ENCODE measurements at regions of chr11 and their contacts with region 1.

Region 1: GRCh38 chr11:13772223-13773046 is 104.0 kb downstream of the FAR1 start:
- DNase-seq: peak; percentile 22
- H3K4me3 Mint-ChIP-seq: no peak overlapping the region
- H3K27ac Mint-ChIP-seq: no peak overlapping the region
- H3K4me1 Mint-ChIP-seq: no peaks in the 10 kb centered on the region
- H3K27me3 Mint-ChIP-seq: peaks cover 14% of the 10 kb centered on the region

Region 2: GRCh38 chr11:13955971-13956421 is 183.6 kb after region 1 on chr11:
- intact Hi-C with region 1: loop called (anchors 5 kb)
- DNase-seq: peak; percentile 20
- H3K4me3 Mint-ChIP-seq: no peak overlapping the region
- H3K27ac Mint-ChIP-seq: no peak overlapping the region
- H3K4me1 Mint-ChIP-seq: no peaks in the 10 kb centered on the region
- H3K27me3 Mint-ChIP-seq: peaks cover 39% of the 10 kb centered on the region

Region 3: GRCh38 chr11:14148653-14149273 is 376.3 kb after region 1 on chr11:
- intact Hi-C with region 1: loop called (anchors 1 kb)
- DNase-seq: no peak
- H3K4me3 Mint-ChIP-seq: no peak overlapping the region
- H3K27ac Mint-ChIP-seq: no peak overlapping the region
- H3K4me1 Mint-ChIP-seq: peaks cover 4% of the 10 kb centered on the region
- H3K27me3 Mint-ChIP-seq: peaks cover 10% of the 10 kb centered on the region

Measured in activated T-helper 1 cell treated with anti-CD3 and anti-CD28 coated beads, Interleukin-12 subunit alpha, Interleukin-12 subunit beta, Interleukin-2, Interleukin-4 antibody, amounts not matched to agents 30 ng/mL and 10 ng/mL and 1 ng/mL, durations not matched to agents 14 hours and 24 hours and 36 hours (primary cell).